ENCODE measurements at regions of chrX and their contacts with region 1.

Region 1: GRCh38 chrX:51420610-51421009 is 75.8 kb downstream of the NUDT11 start:
- DNase-seq: no peak
- ATAC-seq: no peak
- H3K4me3 ChIP-seq: no peak overlapping the region
- H3K27ac ChIP-seq: no peak overlapping the region
- H3K4me1 ChIP-seq: no peaks in the 10 kb centered on the region
- H3K27me3 ChIP-seq: no peaks in the 10 kb centered on the region

Region 2: DNA sequence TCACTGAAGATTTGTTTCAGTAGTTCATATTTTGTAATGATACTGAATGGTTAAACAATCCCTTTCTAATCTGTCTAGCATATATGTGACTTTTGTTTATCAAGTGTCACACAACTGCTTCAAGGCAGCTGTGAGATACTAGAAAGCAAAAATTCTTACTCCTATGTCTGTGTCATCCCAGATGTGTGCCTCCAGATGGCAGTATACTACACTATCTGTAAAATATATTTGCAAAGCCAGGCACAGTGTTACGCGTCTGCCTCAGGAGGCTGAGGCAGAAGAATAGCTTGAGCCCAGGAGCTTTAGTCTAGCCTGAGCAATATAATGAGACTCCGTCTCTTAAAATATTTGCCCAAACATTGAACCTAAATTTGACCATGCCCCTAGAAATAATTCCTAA is 84.0 kb before region 1 on chrX:
- intact Hi-C with region 1: loop called (anchors 2 to 5 kb)
- DNase-seq: no peak
- ATAC-seq: no peak
- H3K4me3 ChIP-seq: no peak overlapping the region
- H3K27ac ChIP-seq: no peak overlapping the region
- H3K4me1 ChIP-seq: no peaks in the 10 kb centered on the region
- H3K27me3 ChIP-seq: no peaks in the 10 kb centered on the region